Activated B cell treated with CpG ODN at 0.5 μM for 24 hours (primary cell): ENCODE measurements at regions of chr6 and their contacts with region 1.

Region 1: DNA sequence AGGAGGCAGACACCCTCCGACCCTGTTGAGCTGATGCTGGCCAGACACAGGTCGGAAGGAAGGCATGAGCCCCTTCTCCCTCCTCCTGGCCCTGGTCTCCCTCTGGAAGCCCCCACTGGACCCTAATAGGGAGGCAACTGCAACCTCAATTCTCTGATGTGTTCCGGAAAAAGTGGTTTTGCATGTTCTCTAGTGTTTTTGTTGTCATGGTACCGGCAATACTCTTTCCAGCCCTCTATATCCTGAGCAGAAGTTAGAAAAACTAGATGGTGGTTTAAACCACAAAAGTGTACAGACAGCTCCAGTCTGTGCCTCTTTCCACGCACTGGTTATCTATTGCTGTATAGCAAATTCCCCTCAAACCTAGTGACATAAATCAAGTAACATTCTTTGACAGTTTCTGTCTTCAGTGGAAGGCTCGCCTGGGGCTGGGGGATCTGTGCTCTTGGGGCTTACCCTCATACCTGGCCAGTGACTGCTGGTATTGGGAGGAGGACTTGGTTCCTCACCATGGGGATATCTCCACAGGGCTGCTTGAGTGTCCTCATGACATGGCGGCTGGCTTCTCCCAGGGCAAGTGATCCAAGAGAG is 37.0 kb downstream of the SYTL3 start:
- DNase-seq: no peak
- ATAC-seq: peak; percentile 84
- H3K4me3 Mint-ChIP-seq: no peak overlapping the region
- H3K27ac Mint-ChIP-seq: no peak overlapping the region
- H3K4me1 Mint-ChIP-seq: peaks cover 21% of the 10 kb centered on the region
- H3K27me3 Mint-ChIP-seq: no peaks in the 10 kb centered on the region
- CTCF ChIP-seq: no peak

Region 2: DNA sequence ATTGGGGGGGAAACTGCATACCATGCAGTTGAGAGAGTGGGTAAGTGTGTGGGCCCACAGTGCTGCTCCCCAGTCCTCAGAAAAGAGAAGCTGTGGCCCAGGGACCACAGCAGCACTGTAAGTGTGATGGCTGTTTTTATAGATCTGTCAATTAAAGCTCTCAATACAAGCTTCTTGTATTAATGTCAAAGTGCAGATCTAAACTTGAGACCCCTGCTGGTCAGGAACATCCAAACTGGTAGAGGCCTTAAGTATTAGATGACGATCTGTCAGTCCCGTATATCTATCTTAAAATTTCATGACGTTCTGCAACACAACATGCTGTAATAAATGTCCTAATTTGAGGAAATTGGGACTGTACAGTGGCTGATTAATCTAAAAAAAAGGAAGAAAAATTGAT is 299.9 kb before region 1 on chr6:
- CTCF ChIA-PET with region 1: interaction called, 4 read pairs
- POLR2A ChIA-PET with region 1: no interaction called
- intact Hi-C with region 1: loop called (anchors 2 kb)
- DNase-seq: no peak
- ATAC-seq: no peak
- H3K4me3 Mint-ChIP-seq: no peak overlapping the region
- H3K27ac Mint-ChIP-seq: no peak overlapping the region
- H3K4me1 Mint-ChIP-seq: peaks cover 6% of the 10 kb centered on the region
- H3K27me3 Mint-ChIP-seq: no peaks in the 10 kb centered on the region
- CTCF ChIP-seq: no peak

Region 3: DNA sequence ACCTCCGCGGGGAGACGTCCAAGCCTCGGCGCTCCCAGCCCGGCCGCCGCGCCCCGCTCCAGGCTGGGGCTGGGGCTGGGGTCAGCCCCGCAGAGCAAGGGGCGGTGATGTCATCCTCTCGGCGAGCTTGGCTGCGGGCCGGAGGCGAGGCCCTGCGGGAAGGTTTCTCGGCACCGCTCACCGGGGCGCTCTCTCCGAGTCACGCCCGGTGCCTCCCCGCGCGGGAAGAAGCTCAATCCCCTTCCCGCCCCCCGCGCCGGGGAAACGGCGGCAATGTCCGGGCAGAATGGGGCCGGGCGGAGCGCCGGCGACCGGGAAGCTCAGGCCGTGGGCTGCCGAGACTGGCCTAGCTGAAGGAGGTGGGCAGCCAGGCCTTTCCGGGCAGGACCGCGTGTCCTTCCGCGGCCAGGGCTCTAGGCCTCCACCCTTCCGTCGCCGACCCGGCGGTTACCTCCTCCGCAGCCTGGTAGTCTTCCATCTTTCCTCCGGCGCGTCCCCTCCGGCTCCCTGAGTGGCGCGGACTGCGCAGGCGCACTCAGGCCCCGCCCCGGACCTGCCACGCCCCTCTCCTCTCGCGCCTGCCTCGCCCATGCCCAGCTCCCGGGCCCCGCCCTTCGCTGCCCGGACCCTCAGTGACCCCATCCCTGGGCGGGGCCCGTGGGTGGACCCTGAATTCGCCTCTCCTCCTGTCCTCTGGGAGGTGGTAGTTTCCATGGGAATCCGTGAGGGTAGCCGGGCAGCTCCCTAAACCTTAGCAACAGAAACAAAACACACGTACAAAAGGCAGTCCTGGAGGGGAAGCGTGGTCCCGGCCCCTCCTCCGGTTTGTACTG is 42.4 kb before region 1 on chr6 and contains the start of gene DYNLT1:
- CTCF ChIA-PET with region 1: interaction called, 13 read pairs
- POLR2A ChIA-PET with region 1: interaction called, 3 read pairs
- intact Hi-C with region 1: loop called (anchors 1 kb)
- DNase-seq: peak; percentile 97
- ATAC-seq: peak; percentile 68
- H3K4me3 Mint-ChIP-seq: peak within 1 kb of the TSS; percentile 95
- H3K27ac Mint-ChIP-seq: peak within 1 kb of the TSS; percentile 85
- H3K4me1 Mint-ChIP-seq: peaks cover 52% of the 10 kb centered on the region
- H3K27me3 Mint-ChIP-seq: no peaks in the 10 kb centered on the region
- CTCF ChIP-seq: no peak
- total RNA-seq, gene DYNLT1: 37.7 and 43.9 TPM in 2 replicates

Region 4: GRCh38 chr6:158649289-158650143 is 37.4 kb before region 1 on chr6 and contains the start of gene SYTL3:
- CTCF ChIA-PET with region 1: interaction called, 13 read pairs
- POLR2A ChIA-PET with region 1: interaction called, 3 read pairs
- intact Hi-C with region 1: loop called (anchors 1 kb)
- DNase-seq: peak; percentile 57
- ATAC-seq: peak; percentile 72
- H3K4me3 Mint-ChIP-seq: peak within 1 kb of the TSS; percentile 86
- H3K27ac Mint-ChIP-seq: peak within 1 kb of the TSS; percentile 100
- H3K4me1 Mint-ChIP-seq: peaks cover 49% of the 10 kb centered on the region
- H3K27me3 Mint-ChIP-seq: peaks cover 2% of the 10 kb centered on the region
- CTCF ChIP-seq: no peak
- total RNA-seq, gene SYTL3: 5.8 and 6.0 TPM in 2 replicates

Region 5: GRCh38 chr6:158660333-158660754 is 26.5 kb before region 1 on chr6:
- CTCF ChIA-PET with region 1: interaction called, 52 read pairs
- POLR2A ChIA-PET with region 1: interaction called, 3 read pairs
- intact Hi-C with region 1: loop called (anchors 1 kb)
- DNase-seq: no peak
- ATAC-seq: peak; percentile 90
- H3K4me3 Mint-ChIP-seq: no peak overlapping the region
- H3K27ac Mint-ChIP-seq: no peak overlapping the region
- H3K4me1 Mint-ChIP-seq: peaks cover 9% of the 10 kb centered on the region
- H3K27me3 Mint-ChIP-seq: peaks cover 14% of the 10 kb centered on the region
- CTCF ChIP-seq: no peak